ENCODE measurements at regions of chr5 and their contacts with region 1.

Region 1: GRCh38 chr5:76874088-76874581 is 24.3 kb downstream of the S100Z start:
- DNase-seq: peak; percentile 39
- ATAC-seq: peak; percentile 89
- H3K4me3 ChIP-seq: no peak overlapping the region; the same call in 1 of the 2 replicates
- H3K27ac ChIP-seq: peak overlapping the region; percentile 30; the same call in 1 of the 2 replicates
- H3K4me1 ChIP-seq: peaks cover 11% of the 10 kb centered on the region; the same call in 1 of the 2 replicates
- H3K27me3 ChIP-seq: no peaks in the 10 kb centered on the region
- CTCF ChIP-seq: no peak
- EP300 ChIP-seq: peak in 1 of 2 experiments; percentile 64; a peak in 1 of 4 replicates
- POLR2A ChIP-seq: no peak
- RAD21 ChIP-seq: no peak

Region 2: DNA sequence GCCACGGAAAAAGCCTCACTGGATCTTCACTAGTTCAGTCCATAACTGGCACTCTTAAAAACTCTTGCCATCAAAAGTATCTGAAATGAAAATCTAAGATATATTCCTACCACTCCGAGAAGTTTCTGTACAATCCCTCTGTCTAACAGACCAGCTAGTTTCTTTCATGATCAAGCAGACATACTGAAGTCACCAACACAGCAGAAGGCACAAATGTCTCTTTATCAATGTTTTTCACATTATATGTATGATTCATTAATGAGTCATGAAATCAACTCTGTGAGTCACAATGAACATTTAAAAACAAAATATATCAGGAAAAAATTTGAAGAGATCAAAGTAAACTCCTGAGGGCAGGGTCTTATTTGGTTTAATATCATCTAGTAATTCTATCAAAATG is 107.4 kb before region 1 on chr5:
- CTCF ChIA-PET with region 1: no interaction called
- POLR2A ChIA-PET with region 1: no interaction called
- RAD21 ChIA-PET with region 1: no interaction called
- SMC1A ChIA-PET with region 1: no interaction called
- in situ Hi-C with region 1: no loop called
- intact Hi-C with region 1: no loop called
- DNase-seq: no peak
- ATAC-seq: no peak
- H3K4me3 ChIP-seq: no peak overlapping the region
- H3K27ac ChIP-seq: no peak overlapping the region
- H3K4me1 ChIP-seq: no peaks in the 10 kb centered on the region
- H3K27me3 ChIP-seq: no peaks in the 10 kb centered on the region
- CTCF ChIP-seq: no peak
- EP300 ChIP-seq: no peak
- POLR2A ChIP-seq: no peak
- RAD21 ChIP-seq: no peak

Region 3: DNA sequence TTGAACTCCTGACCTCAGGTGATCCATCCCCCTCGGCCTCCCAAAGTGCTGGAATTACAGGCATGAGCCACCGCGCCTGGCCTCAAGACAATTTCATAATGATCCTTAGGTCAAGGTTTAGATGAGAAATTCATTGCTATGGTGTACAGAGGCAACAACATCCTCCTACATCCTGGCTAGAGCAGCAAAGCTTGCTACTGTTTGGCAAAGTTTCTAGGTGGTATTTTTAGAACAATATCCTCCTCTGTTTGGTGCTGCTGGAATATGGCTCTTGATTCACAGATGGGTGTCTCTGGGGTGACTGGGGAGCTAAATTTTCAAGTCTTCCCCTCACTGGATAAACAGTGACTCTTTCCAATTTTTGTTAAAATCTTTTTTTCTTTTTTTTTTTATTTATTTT is 109.3 kb after region 1 on chr5:
- CTCF ChIA-PET with region 1: no interaction called
- POLR2A ChIA-PET with region 1: no interaction called
- RAD21 ChIA-PET with region 1: no interaction called
- SMC1A ChIA-PET with region 1: no interaction called
- in situ Hi-C with region 1: no loop called
- intact Hi-C with region 1: no loop called
- DNase-seq: no peak
- ATAC-seq: no peak
- H3K4me3 ChIP-seq: no peak overlapping the region
- H3K27ac ChIP-seq: no peak overlapping the region
- H3K4me1 ChIP-seq: no peaks in the 10 kb centered on the region
- H3K27me3 ChIP-seq: no peaks in the 10 kb centered on the region
- CTCF ChIP-seq: no peak
- EP300 ChIP-seq: no peak
- POLR2A ChIP-seq: no peak
- RAD21 ChIP-seq: no peak

Region 4: GRCh38 chr5:77015938-77016569 is 141.9 kb after region 1 on chr5:
- CTCF ChIA-PET with region 1: interaction called, 39 read pairs
- POLR2A ChIA-PET with region 1: no interaction called
- RAD21 ChIA-PET with region 1: interaction called, 20 read pairs
- SMC1A ChIA-PET with region 1: interaction called, 31 read pairs
- in situ Hi-C with region 1: loop called (anchors 5 kb)
- intact Hi-C with region 1: no loop called
- DNase-seq: no peak
- ATAC-seq: peak; percentile 57
- H3K4me3 ChIP-seq: no peak overlapping the region
- H3K27ac ChIP-seq: no peak overlapping the region
- H3K4me1 ChIP-seq: no peaks in the 10 kb centered on the region
- H3K27me3 ChIP-seq: no peaks in the 10 kb centered on the region; a peak in 1 of 4 replicates
- CTCF ChIP-seq: peak in 1 of 3 experiments; percentile 42; a peak in 3 of 6 replicates
- EP300 ChIP-seq: no peak
- POLR2A ChIP-seq: no peak
- RAD21 ChIP-seq: peak; percentile 64

Region 5: GRCh38 chr5:77076961-77077823 is 203.1 kb after region 1 on chr5:
- CTCF ChIA-PET with region 1: no interaction called
- POLR2A ChIA-PET with region 1: no interaction called
- RAD21 ChIA-PET with region 1: interaction called, 19 read pairs
- SMC1A ChIA-PET with region 1: interaction called, 3 read pairs
- in situ Hi-C with region 1: loop called (anchors 5 kb)
- intact Hi-C with region 1: loop called (anchors 2 kb)
- DNase-seq: no peak
- ATAC-seq: peak; percentile 94
- H3K4me3 ChIP-seq: peak overlapping the region; percentile 5; the same call in 1 of the 2 replicates
- H3K27ac ChIP-seq: no peak overlapping the region
- H3K4me1 ChIP-seq: 0 out of 2 replicates have a peak, but pooled peaks cover 3% of the 10 kb centered on the region
- H3K27me3 ChIP-seq: no peaks in the 10 kb centered on the region
- CTCF ChIP-seq: peak; percentile 60 to 73 (median 66); a peak in 5 of 6 replicates
- EP300 ChIP-seq: no peak
- POLR2A ChIP-seq: no peak
- RAD21 ChIP-seq: peak; percentile 60

Region 6: DNA sequence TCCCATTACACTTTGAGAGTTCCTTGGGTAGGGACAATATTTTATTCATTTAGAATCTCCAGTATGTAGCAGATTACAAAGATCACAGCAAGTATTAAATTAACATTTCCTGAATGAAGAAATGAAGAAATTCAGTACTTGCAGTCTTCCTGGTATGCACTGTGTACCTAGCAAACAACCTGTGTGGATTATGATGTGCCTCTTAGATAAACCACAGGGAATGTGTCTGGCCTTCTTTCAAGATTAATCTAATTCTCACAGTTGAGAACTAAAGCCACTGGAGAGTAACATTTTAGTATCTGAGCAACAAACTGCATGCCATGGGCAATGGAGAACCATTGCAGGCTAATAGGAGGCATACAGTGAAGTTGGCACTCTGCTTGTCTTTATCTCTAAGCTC is 1221.0 kb after region 1 on chr5:
- CTCF ChIA-PET with region 1: no interaction called
- POLR2A ChIA-PET with region 1: no interaction called
- RAD21 ChIA-PET with region 1: no interaction called
- SMC1A ChIA-PET with region 1: no interaction called
- in situ Hi-C with region 1: no loop called
- intact Hi-C with region 1: no loop called
- DNase-seq: no peak
- ATAC-seq: no peak
- H3K4me3 ChIP-seq: no peak overlapping the region
- H3K27ac ChIP-seq: no peak overlapping the region
- H3K4me1 ChIP-seq: no peaks in the 10 kb centered on the region
- H3K27me3 ChIP-seq: no peaks in the 10 kb centered on the region
- CTCF ChIP-seq: no peak
- EP300 ChIP-seq: no peak
- POLR2A ChIP-seq: no peak
- RAD21 ChIP-seq: no peak